Activated T-helper 2 cell treated with anti-CD3 and anti-CD28 coated beads, Interferon-gamma antibody, Interleukin-2, Interleukin-4, amounts not matched to agents 10 μg/mL and 5 μg/mL and 100 μg/mL, durations not matched to agents 14 hours and 24 hours and 36 hours (primary cell): ENCODE measurements at regions of chr6 and their contacts with region 1.

Region 1: GRCh38 chr6:138109042-138109997 is 2.1 kb upstream of the PERP start:
- DNase-seq: peak; percentile 65
- H3K4me3 Mint-ChIP-seq: peak overlapping the region; percentile 11
- H3K27ac Mint-ChIP-seq: no peak overlapping the region
- H3K4me1 Mint-ChIP-seq: peaks cover 26% of the 10 kb centered on the region
- H3K27me3 Mint-ChIP-seq: peaks cover 36% of the 10 kb centered on the region

Region 2: DNA sequence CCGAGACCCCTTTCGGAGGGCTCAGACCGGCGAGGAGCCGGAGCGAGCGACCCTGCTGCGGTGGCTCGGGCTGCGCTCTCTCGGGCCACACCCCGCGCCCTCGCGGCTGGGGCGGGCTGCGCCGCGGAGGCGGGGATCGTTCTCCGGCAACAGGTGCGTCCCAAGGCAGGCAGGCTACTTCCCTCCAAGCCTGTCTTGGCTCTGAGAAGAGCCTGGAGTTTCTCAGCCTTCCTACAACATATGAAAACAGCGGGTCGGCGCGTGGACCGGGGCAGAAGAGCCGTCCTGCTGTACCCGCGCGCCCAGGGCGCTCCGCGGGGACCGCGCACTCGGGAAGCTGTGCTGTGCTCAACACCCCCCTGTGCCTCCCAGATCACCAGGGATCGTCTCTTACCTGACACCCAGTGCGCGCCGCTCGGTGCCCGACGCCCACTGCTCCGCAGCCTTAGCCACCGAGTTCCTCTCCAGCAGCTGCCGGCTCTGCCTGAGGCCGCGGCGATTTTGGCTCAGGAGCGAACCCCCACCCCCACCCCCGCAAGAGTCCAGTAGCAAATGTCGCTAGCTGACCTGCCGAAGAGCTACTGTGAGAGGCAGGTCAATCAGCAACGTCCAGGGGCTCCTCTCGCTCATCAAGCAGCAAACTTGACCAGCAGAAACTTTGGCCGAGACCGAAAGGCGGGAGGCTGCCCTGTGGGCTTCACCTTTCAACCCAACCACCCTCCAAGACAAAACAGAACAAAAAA is 611.4 kb before region 1 on chr6:
- intact Hi-C with region 1: loop called (anchors 5 kb)
- DNase-seq: no peak
- H3K4me3 Mint-ChIP-seq: no peak overlapping the region
- H3K27ac Mint-ChIP-seq: no peak overlapping the region
- H3K4me1 Mint-ChIP-seq: peaks cover 28% of the 10 kb centered on the region
- H3K27me3 Mint-ChIP-seq: peaks cover 82% of the 10 kb centered on the region

Region 3: GRCh38 chr6:138001750-138002349 is 107.5 kb before region 1 on chr6:
- intact Hi-C with region 1: loop called (anchors 1 kb)
- DNase-seq: peak; percentile 31
- H3K4me3 Mint-ChIP-seq: no peak overlapping the region
- H3K27ac Mint-ChIP-seq: no peak overlapping the region
- H3K4me1 Mint-ChIP-seq: peaks cover 15% of the 10 kb centered on the region
- H3K27me3 Mint-ChIP-seq: peaks cover 17% of the 10 kb centered on the region

Region 4: GRCh38 chr6:138037009-138037504 is 72.3 kb before region 1 on chr6:
- intact Hi-C with region 1: no loop called
- DNase-seq: no peak
- H3K4me3 Mint-ChIP-seq: no peak overlapping the region
- H3K27ac Mint-ChIP-seq: no peak overlapping the region
- H3K4me1 Mint-ChIP-seq: no peaks in the 10 kb centered on the region
- H3K27me3 Mint-ChIP-seq: peaks cover 5% of the 10 kb centered on the region

Region 5: GRCh38 chr6:138073264-138073663 is 36.1 kb before region 1 on chr6:
- intact Hi-C with region 1: no loop called
- DNase-seq: no peak
- H3K4me3 Mint-ChIP-seq: no peak overlapping the region
- H3K27ac Mint-ChIP-seq: no peak overlapping the region
- H3K4me1 Mint-ChIP-seq: no peaks in the 10 kb centered on the region
- H3K27me3 Mint-ChIP-seq: peaks cover 16% of the 10 kb centered on the region